Natural killer cell (primary cell): ENCODE measurements at regions of chr21 and their contacts with region 1.

Region 1: DNA sequence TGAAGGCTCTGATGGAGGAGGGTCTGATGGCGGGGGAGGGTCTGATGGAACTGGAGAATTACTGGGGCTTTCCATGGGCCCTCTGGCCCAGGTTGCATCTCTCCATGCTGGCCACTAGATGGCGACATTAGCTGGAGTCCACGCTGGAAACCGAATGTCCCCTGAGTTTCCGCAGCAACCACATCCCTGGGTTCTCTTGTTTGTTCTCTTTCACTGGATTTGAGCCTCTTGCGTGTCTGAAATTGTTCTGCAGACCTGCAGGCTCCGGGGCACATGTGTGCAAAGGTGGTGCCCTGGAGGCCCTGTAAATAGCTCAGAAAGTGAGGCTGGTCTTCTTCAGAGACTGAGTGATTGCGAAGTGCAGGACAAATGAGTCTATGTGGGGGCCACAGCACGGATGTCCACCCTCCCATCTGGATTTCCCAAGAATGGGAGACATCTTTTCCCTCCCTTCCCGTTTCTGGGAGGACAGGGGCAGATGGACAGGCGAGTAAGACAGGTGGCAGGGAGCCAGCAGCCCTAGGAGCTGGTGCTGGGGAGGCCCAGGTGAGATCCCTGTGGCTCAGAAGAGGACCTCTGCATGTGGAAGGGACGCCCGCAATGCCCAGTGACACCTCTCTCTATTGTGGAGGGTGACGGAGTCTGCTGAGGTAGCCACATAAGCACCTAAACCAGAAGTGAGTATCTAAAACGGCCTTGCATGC is 73.2 kb upstream of the ABCG1 start:
- DNase-seq: peak; percentile 54 to 88
- ATAC-seq: peak; percentile 84 to 93 (median 92)
- H3K4me3 ChIP-seq: no peak overlapping the region
- H3K4me3 Mint-ChIP-seq: no peak overlapping the region
- H3K27ac ChIP-seq: no peak overlapping the region
- H3K27ac Mint-ChIP-seq: peak overlapping the region; percentile 31 to 78
- H3K4me1 ChIP-seq: peaks cover 14% of the 10 kb centered on the region
- H3K4me1 Mint-ChIP-seq: peaks cover 8 to 12% of the 10 kb centered on the region in 2 donors
- H3K27me3 ChIP-seq: no peaks in the 10 kb centered on the region
- H3K27me3 Mint-ChIP-seq: peaks cover 12 to 18% of the 10 kb centered on the region in 2 donors
- CTCF ChIP-seq: peak; percentile 86

Region 2: GRCh38 chr21:41783441-41784161 is 362.1 kb before region 1 on chr21:
- intact Hi-C with region 1: no loop called
- DNase-seq: peak in 1 of 2 donors; percentile 37
- ATAC-seq: no peak
- H3K4me3 ChIP-seq: no peak overlapping the region
- H3K4me3 Mint-ChIP-seq: no peak overlapping the region
- H3K27ac ChIP-seq: no peak overlapping the region
- H3K27ac Mint-ChIP-seq: no peak overlapping the region
- H3K4me1 ChIP-seq: no peaks in the 10 kb centered on the region
- H3K4me1 Mint-ChIP-seq: peaks cover 0 to 6% of the 10 kb centered on the region in 2 donors
- H3K27me3 ChIP-seq: peaks cover 16% of the 10 kb centered on the region
- H3K27me3 Mint-ChIP-seq: peaks cover 36 to 55% of the 10 kb centered on the region in 2 donors
- CTCF ChIP-seq: no peak

Region 3: GRCh38 chr21:42107881-42108553 is 37.7 kb before region 1 on chr21:
- intact Hi-C with region 1: no loop called
- DNase-seq: peak in 1 of 2 donors; percentile 85
- ATAC-seq: peak; percentile 75 to 97 (median 78)
- H3K4me3 ChIP-seq: no peak overlapping the region
- H3K4me3 Mint-ChIP-seq: no peak overlapping the region
- H3K27ac ChIP-seq: no peak overlapping the region
- H3K27ac Mint-ChIP-seq: no peak overlapping the region
- H3K4me1 ChIP-seq: peaks cover 13% of the 10 kb centered on the region
- H3K4me1 Mint-ChIP-seq: no peaks in the 10 kb centered on the region
- H3K27me3 ChIP-seq: no peaks in the 10 kb centered on the region
- H3K27me3 Mint-ChIP-seq: peaks cover 20 to 29% of the 10 kb centered on the region in 2 donors
- CTCF ChIP-seq: no peak

Region 4: GRCh38 chr21:42258153-42258884 is 112.6 kb after region 1 on chr21:
- intact Hi-C with region 1: loop called (anchors 1 kb)
- DNase-seq: peak; percentile 81 to 90
- ATAC-seq: peak; percentile 86 to 100 (median 97)
- H3K4me3 ChIP-seq: no peak overlapping the region
- H3K4me3 Mint-ChIP-seq: no peak overlapping the region
- H3K27ac ChIP-seq: no peak overlapping the region
- H3K27ac Mint-ChIP-seq: peak overlapping the region in 1 of 2 donors; percentile 59
- H3K4me1 ChIP-seq: peaks cover 25% of the 10 kb centered on the region
- H3K4me1 Mint-ChIP-seq: peaks cover 6 to 27% of the 10 kb centered on the region in 2 donors
- H3K27me3 ChIP-seq: no peaks in the 10 kb centered on the region
- H3K27me3 Mint-ChIP-seq: peaks cover 3 to 6% of the 10 kb centered on the region in 2 donors
- CTCF ChIP-seq: peak; percentile 89